Psoas muscle (tissue), 8 donors: ENCODE measurements at regions of chr12 and their contacts with region 1.

Region 1: DNA sequence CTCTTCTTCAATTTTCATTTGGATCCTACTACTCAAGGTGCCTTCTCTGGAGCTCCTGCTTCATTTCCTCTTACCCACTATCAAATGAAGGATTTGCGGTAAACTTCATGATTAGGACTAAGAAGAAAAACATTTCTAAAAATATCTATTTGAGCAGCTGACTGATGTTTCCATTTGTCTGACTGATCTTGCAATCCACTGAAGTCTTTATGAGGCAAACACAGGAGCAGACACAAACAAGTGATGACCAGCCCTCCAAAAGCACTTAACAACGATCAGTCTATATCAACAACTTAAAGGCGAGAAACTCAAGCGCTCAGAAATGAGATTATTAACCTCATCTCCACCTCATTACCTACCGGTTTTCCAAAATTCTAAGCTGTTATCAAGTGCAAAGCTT is 26.2 kb downstream of the OSBPL8 start:
- DNase-seq: no peak
- ATAC-seq: peak; percentile 68 to 77 (median 72)
- H3K4me3 ChIP-seq: no peak overlapping the region
- H3K27ac ChIP-seq: peak overlapping the region; percentile 68
- H3K4me1 ChIP-seq: peaks cover 27% of the 10 kb centered on the region
- H3K27me3 ChIP-seq: no peaks in the 10 kb centered on the region
- CTCF ChIP-seq: no peak

Region 2: DNA sequence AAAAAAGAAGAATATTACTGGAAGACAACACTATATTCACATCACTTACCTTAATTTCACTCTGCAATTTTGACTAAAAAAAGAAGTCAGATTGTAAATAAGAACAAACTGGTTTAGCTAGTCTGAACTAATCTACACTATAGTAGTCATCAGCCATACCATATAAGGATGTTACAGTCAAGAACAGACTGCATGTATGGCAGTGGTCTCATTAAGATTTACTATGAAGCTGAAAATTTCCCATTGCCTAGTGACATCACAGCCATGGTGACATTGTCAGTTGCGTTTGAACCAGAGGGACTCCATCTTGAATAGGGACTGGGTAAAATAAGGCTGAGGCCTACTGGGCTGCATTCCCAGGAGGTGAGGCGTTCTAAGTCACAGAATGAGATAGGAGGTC is 25.2 kb before region 1 on chr12:
- intact Hi-C with region 1: no loop called
- DNase-seq: no peak
- ATAC-seq: no peak
- H3K4me3 ChIP-seq: no peak overlapping the region
- H3K27ac ChIP-seq: no peak overlapping the region
- H3K4me1 ChIP-seq: no peaks in the 10 kb centered on the region
- H3K27me3 ChIP-seq: no peaks in the 10 kb centered on the region
- CTCF ChIP-seq: no peak

Region 3: GRCh38 chr12:76720068-76720467 is 186.7 kb after region 1 on chr12:
- intact Hi-C with region 1: no loop called
- DNase-seq: no peak
- ATAC-seq: no peak
- H3K4me3 ChIP-seq: no peak overlapping the region
- H3K27ac ChIP-seq: no peak overlapping the region
- H3K4me1 ChIP-seq: no peaks in the 10 kb centered on the region
- H3K27me3 ChIP-seq: no peaks in the 10 kb centered on the region
- CTCF ChIP-seq: no peak

Region 4: DNA sequence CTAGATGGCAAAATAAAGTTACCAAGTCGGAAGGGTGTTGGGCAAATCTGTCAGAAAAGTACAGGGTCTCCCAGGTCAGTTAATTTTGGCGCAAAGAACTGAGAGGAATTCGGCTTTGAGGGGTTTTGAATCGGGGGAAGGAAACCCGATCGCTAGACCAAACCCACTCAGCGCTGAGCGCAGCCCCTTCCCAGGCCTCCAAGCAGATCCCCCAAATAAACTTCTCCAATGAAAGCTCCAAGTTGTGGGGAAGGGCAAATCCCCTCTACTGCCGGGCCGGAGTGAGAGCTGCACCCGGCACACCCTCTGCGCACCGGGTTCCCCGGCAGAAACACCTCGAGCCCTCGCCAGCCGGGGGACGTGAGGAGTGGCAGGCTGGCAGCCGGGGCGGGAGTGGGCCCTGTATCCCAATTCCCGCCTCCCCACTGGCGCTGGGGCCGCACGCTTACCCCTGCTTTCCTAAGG is 531.6 kb after region 1 on chr12:
- intact Hi-C with region 1: loop called in 1 of 2 experiments (anchors 5 kb)
- DNase-seq: no peak
- ATAC-seq: peak; percentile 10 to 48 (median 40)
- H3K4me3 ChIP-seq: peak overlapping the region; percentile 81
- H3K27ac ChIP-seq: no peak overlapping the region
- H3K4me1 ChIP-seq: peaks cover 8% of the 10 kb centered on the region
- H3K27me3 ChIP-seq: peaks cover 0 to 29% (median 4%) of the 10 kb centered on the region in 3 donors
- CTCF ChIP-seq: no peak